ENCODE measurements at regions of chr12 and their contacts with region 1.

Region 1: GRCh38 chr12:97235102-97235501 is 227.5 kb upstream of the RMST start:
- DNase-seq: no peak
- H3K4me3 ChIP-seq: no peak overlapping the region
- H3K27ac ChIP-seq: no peak overlapping the region
- H3K4me1 ChIP-seq: no peaks in the 10 kb centered on the region
- H3K27me3 ChIP-seq: no peaks in the 10 kb centered on the region
- CTCF ChIP-seq: no peak
- POLR2A ChIP-seq: no peak

Region 2: DNA sequence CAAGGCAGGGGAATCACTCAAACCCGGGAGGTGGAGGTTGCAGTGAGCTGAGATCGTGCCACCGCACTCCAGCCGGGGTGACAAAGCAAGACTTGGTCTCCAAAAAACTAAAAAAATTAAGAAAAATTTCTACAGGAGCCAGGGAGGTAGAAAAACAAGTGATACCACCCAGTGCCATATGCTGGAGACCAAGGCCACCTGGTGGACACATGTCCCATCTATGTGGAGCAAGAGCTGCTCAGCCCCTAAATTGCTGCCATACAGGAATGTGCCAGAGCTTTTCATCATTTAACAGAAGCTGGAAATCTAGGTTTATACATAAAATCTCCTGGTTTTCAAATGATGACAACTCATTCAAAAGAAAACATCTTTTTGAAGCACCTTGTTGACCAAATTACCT is 1102.3 kb before region 1 on chr12:
- intact Hi-C with region 1: loop called (anchors 5 kb)
- DNase-seq: no peak
- H3K4me3 ChIP-seq: no peak overlapping the region
- H3K27ac ChIP-seq: no peak overlapping the region
- H3K4me1 ChIP-seq: no peaks in the 10 kb centered on the region
- H3K27me3 ChIP-seq: no peaks in the 10 kb centered on the region
- CTCF ChIP-seq: no peak
- POLR2A ChIP-seq: no peak

Region 3: DNA sequence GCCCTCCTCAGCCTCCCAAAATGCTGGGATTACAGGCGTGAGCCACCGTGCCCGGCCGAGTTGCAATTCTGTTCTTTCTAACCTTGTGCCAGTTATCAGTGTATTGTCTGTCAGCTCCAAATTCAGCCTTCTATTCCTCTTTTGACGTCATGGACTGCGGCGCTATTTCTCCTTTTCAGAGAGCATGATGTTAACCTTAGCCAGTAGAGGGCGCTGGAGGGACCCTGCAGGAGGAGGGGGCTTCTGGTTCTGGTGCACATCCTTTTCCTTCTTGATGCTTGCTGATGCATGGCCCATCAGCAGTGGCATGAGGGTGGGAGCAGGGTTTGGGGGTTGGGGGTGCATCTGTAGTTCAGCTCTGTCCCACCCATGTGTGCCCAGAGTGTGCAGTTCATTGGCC is 48.2 kb after region 1 on chr12:
- intact Hi-C with region 1: no loop called
- DNase-seq: no peak
- H3K4me3 ChIP-seq: no peak overlapping the region
- H3K27ac ChIP-seq: no peak overlapping the region
- H3K4me1 ChIP-seq: no peaks in the 10 kb centered on the region
- H3K27me3 ChIP-seq: no peaks in the 10 kb centered on the region
- CTCF ChIP-seq: no peak
- POLR2A ChIP-seq: no peak